Endothelial cell of umbilical vein (primary cell): ENCODE measurements at regions of chr4 and their contacts with region 1.

Region 1: GRCh38 chr4:121736735-121737351 is 28.1 kb downstream of the SMIM43 start:
- DNase-seq: peak; percentile 52
- H3K4me3 ChIP-seq: no peak overlapping the region
- H3K27ac ChIP-seq: no peak overlapping the region
- H3K4me1 ChIP-seq: no peaks in the 10 kb centered on the region
- H3K27me3 ChIP-seq: no peaks in the 10 kb centered on the region
- CTCF ChIP-seq: peak; percentile 40 to 61
- POLR2A ChIP-seq: no peak

Region 2: DNA sequence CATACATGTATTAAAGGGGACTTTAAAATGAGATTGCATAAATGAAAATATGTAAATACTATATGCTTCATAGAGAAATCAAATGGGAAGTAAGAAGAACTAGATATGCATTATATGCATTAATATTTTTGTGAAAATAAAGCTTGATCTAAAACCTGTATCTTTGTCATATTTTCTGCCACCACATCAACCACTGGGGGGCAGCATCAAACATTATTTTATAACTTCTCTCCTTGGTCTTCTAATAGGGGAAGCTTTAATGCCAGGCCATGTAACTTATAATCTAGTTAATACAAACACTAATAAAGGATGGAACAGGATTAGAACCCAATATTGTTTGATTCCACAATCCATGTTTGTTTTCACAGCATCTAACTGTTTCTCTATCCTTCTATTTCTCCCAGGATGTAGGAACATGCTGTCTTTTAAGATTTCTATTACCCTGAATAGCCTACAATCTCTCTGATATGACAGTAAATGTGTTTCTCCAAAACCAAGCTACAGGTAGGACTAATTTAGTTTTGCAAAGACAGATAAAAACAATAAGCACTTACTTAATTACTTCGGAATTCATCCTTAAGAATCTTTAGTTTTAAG is 366.0 kb before region 1 on chr4:
- CTCF ChIA-PET with region 1: interaction called, 129 read pairs
- POLR2A ChIA-PET with region 1: no interaction called
- dilution Hi-C with region 1: no loop called
- intact Hi-C with region 1: loop called (anchors 1 kb)
- DNase-seq: peak; percentile 53
- H3K4me3 ChIP-seq: no peak overlapping the region
- H3K27ac ChIP-seq: no peak overlapping the region
- H3K4me1 ChIP-seq: no peaks in the 10 kb centered on the region
- H3K27me3 ChIP-seq: peaks cover 0 to 7% of the 10 kb centered on the region in 2 experiments
- CTCF ChIP-seq: peak; percentile 22 to 35
- POLR2A ChIP-seq: no peak

Region 3: DNA sequence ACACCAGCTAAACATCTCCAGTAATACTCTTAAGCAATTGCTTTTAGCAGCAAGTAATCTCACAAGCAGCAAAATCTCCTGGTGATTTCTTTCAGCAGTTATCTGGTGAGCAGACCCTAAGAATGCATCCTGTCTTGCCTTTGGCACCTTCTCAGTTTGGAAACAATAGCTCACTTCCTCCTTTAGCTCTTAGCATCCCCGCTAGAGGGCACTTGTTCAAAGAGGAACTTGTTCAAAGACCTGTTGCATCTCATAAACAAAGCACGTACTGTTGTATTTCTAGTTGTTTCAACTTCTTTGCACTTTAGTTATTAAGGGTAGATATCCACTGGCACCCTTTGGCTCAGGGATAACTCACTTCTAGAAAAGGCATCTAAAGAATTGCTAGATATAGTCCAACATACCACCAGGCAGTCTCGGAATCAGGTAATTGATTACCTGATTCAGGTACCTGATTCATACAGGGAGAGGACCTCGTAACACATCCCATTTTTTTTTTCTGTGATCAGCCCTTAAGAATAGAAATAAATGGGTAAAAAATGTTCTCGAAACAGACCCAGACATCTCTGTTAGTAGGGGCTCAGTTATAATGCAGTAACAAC is 274.1 kb before region 1 on chr4:
- CTCF ChIA-PET with region 1: interaction called, 72 read pairs
- POLR2A ChIA-PET with region 1: no interaction called
- dilution Hi-C with region 1: no loop called
- intact Hi-C with region 1: loop called (anchors 1 kb)
- DNase-seq: peak; percentile 78
- H3K4me3 ChIP-seq: no peak overlapping the region
- H3K27ac ChIP-seq: no peak overlapping the region
- H3K4me1 ChIP-seq: no peaks in the 10 kb centered on the region
- H3K27me3 ChIP-seq: peaks cover 0 to 9% of the 10 kb centered on the region in 2 experiments
- CTCF ChIP-seq: peak; percentile 63 to 67
- POLR2A ChIP-seq: no peak

Region 4: GRCh38 chr4:121484633-121485032 is 252.2 kb before region 1 on chr4:
- CTCF ChIA-PET with region 1: interaction called, 77 read pairs
- POLR2A ChIA-PET with region 1: no interaction called
- dilution Hi-C with region 1: loop called (anchors 25 kb)
- intact Hi-C with region 1: loop called (anchors 1 kb)
- DNase-seq: peak; percentile 47
- H3K4me3 ChIP-seq: no peak overlapping the region
- H3K27ac ChIP-seq: no peak overlapping the region
- H3K4me1 ChIP-seq: no peaks in the 10 kb centered on the region
- H3K27me3 ChIP-seq: peaks cover 0 to 17% of the 10 kb centered on the region in 2 experiments
- CTCF ChIP-seq: peak; percentile 68 to 78
- POLR2A ChIP-seq: no peak

Region 5: GRCh38 chr4:121656269-121656641 is 80.6 kb before region 1 on chr4:
- CTCF ChIA-PET with region 1: interaction called, 5 read pairs
- POLR2A ChIA-PET with region 1: no interaction called
- dilution Hi-C with region 1: no loop called
- intact Hi-C with region 1: loop called (anchors 5 kb)
- DNase-seq: peak; percentile 66
- H3K4me3 ChIP-seq: no peak overlapping the region
- H3K27ac ChIP-seq: no peak overlapping the region
- H3K4me1 ChIP-seq: no peaks in the 10 kb centered on the region
- H3K27me3 ChIP-seq: no peaks in the 10 kb centered on the region
- CTCF ChIP-seq: peak; percentile 30 to 56
- POLR2A ChIP-seq: no peak

Region 6: DNA sequence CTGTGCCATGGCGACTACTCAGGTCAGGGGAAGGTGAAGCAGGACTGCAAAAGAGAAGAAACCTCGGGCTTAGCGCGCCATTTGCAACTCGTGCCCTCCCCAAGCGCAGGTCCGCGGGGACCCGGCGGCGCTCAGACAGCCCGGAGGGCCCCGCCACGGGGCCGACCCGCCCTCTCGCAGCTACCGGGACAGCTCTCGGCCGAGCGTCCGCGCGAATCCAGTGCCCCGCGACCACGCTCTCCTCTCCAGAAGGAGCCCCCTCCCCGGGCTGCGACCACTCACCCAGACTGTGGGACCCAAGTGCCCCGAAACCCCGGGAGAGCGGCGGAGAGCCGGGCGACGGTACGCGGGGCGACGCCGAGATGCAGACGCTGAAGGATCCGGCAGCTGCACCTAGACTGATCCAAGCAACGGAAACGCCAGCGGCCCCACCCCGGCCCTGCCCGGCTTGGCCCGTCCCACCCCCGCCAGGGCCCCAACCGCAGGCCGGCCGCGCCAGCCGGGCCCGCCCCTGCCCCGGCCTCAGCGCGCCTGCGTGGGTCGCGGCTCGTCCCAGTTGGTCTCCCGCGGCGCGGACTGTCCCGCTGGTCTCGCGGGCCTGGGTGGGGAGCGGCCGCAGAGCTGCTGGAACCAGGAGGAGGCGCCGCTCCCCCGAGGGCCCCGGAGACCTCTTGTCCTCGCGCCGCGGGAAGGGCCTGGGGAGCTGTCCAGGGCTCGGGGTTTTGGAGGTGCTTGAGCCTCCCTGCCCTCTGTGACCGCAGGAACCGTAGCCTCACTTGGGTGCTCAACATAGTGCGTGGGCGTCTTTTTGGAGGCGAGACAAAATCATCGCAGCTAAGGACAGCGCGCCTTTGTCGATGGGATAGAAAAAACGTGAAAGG is 40.0 kb before region 1 on chr4 and contains the start of gene ANXA5:
- CTCF ChIA-PET with region 1: interaction called, 9 read pairs
- POLR2A ChIA-PET with region 1: no interaction called
- dilution Hi-C with region 1: no loop called
- intact Hi-C with region 1: loop called (anchors 2 kb)
- DNase-seq: peak; percentile 88
- H3K4me3 ChIP-seq: peak within 1 kb of the TSS; percentile 53 to 86 (median 70)
- H3K27ac ChIP-seq: peak within 1 kb of the TSS; percentile 97
- H3K4me1 ChIP-seq: peaks cover 33% of the 10 kb centered on the region
- H3K27me3 ChIP-seq: no peaks in the 10 kb centered on the region
- CTCF ChIP-seq: peak; percentile 41 to 49
- POLR2A ChIP-seq: peak; percentile 93
- total RNA-seq, gene ANXA5: 528 and 529 TPM in 2 replicates

Region 7: DNA sequence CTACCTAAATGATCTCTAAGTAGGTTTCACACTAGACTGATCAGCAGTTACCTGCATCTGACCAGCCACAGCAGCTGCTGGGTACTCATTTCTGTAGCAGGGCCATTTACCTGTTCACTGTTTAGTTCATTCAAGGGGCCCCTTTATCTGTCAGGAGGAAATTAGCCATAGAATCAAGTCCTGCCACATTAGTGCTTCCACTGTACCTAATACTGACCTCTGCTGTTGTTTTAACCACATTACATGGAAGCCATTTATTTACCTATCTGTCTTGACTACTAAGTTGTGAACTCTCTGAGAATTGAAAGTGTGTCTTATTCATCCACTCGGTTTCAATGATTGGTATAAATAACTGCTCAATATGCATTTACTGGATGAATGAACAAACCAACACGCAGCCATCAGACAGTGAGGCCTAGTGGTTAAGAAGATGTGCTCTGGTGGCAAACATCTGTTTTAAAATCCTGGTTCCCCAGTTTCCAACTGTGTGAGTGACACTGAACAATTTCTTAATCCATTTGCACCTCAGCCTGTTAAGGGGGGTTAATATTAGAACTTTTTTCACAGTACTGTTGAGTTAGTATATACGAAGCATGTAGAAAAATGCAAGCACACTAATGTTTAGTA is 10.1 kb before region 1 on chr4:
- CTCF ChIA-PET with region 1: interaction called, 13 read pairs
- POLR2A ChIA-PET with region 1: interaction called, 3 read pairs
- dilution Hi-C with region 1: no loop called
- intact Hi-C with region 1: no loop called
- DNase-seq: peak; percentile 79
- H3K4me3 ChIP-seq: no peak overlapping the region
- H3K27ac ChIP-seq: no peak overlapping the region
- H3K4me1 ChIP-seq: peaks cover 10% of the 10 kb centered on the region
- H3K27me3 ChIP-seq: no peaks in the 10 kb centered on the region
- CTCF ChIP-seq: peak; percentile 55 to 58
- POLR2A ChIP-seq: no peak